ENCODE measurements at regions of chr11 and their contacts with region 1.

Region 1: DNA sequence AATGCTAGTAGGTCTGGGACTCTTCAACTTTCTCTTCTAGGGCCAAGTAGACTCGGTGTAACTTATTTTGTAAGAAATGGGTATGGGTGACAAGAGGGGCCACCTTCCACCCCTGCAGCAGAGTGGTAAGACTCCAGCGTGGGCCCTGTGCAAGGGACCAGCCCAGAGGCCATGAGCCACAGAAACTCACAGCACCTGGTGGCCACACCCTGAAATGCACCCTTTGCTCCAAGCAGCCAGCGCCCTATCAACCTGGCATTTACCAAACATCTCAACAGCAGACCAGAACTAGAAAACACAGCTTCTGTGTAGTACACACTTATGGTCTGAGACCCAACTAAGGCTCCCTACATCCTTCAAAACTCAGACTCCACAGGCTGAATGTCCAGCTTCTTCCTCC is 5.7 kb downstream of the CDCA5 start:
- DNase-seq: peak in 1 of 2 experiments; percentile 86
- H3K4me3 ChIP-seq: no peak overlapping the region
- H3K27ac ChIP-seq: no peak overlapping the region
- H3K4me1 ChIP-seq: peaks cover 0 to 6% (median 2%) of the 10 kb centered on the region in 4 experiments; a peak in 4 of 7 replicates
- H3K27me3 ChIP-seq: no peaks in the 10 kb centered on the region
- CTCF ChIP-seq: peak; percentile 79 to 92 (median 88)
- EP300 ChIP-seq: no peak
- POLR2A ChIP-seq: peak in 1 of 2 experiments; percentile 15; a peak in 2 of 3 replicates
- RAD21 ChIP-seq: peak; percentile 60 to 68

Region 2: GRCh38 chr11:65040847-65041621 is 37.1 kb before region 1 on chr11 and contains the start of gene SAC3D1:
- CTCF ChIA-PET with region 1: interaction called, 12 read pairs
- POLR2A ChIA-PET with region 1: interaction called, 10 read pairs
- DNase-seq: peak; percentile 80 to 94
- H3K4me3 ChIP-seq: peak within 1 kb of the TSS; percentile 48 to 93 (median 80)
- H3K27ac ChIP-seq: peak within 1 kb of the TSS; percentile 85; the same call in 1 of the 2 replicates
- H3K4me1 ChIP-seq: no peaks in the 10 kb centered on the region; a peak in 2 of 7 replicates
- H3K27me3 ChIP-seq: no peaks in the 10 kb centered on the region
- CTCF ChIP-seq: no peak
- EP300 ChIP-seq: no peak
- POLR2A ChIP-seq: peak; percentile 58 to 60
- RAD21 ChIP-seq: no peak
- total RNA-seq, gene SAC3D1: 19.4 and 23.3 TPM in 2 replicates

Region 3: DNA sequence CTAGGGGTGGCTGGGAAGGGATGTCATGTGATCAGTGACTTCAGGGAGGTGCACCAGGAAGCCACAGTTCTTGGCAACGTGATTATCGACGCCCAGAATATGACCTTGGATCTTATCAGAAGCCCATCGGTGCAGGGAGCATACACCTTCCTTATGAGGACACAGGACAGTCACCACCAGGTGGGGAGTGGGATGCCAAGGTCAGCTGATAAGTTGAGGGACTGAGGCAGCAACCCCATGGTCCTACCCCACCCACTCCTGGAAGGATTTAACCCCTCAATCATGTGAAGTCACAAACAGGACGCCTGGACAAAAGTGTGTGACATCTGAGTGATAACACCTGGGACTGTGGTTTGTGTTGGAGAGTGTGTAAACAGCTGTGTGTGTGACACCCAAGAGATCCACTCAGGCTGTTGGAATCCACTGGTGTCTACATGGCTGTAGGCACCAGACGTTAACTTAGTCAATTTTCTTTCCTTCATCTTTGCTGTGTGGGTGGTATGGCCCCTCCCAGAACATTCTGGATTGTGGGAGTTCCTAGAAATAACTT is 17.8 kb before region 1 on chr11:
- CTCF ChIA-PET with region 1: interaction called, 28 read pairs
- POLR2A ChIA-PET with region 1: interaction called, 18 read pairs
- DNase-seq: no peak
- H3K4me3 ChIP-seq: no peak overlapping the region
- H3K27ac ChIP-seq: no peak overlapping the region
- H3K4me1 ChIP-seq: no peaks in the 10 kb centered on the region
- H3K27me3 ChIP-seq: no peaks in the 10 kb centered on the region; a peak in 1 of 7 replicates
- CTCF ChIP-seq: no peak
- EP300 ChIP-seq: no peak
- POLR2A ChIP-seq: no peak
- RAD21 ChIP-seq: no peak